ENCODE measurements at regions of chr9 and their contacts with region 1.

Region 1: GRCh38 chr9:95127249-95128176 is 190.0 kb downstream of the FANCC start:
- DNase-seq: peak; percentile 42 to 80 (median 67)
- ATAC-seq: peak; percentile 68
- H3K4me3 ChIP-seq: no peak overlapping the region
- H3K4me3 Mint-ChIP-seq: no peak overlapping the region
- H3K27ac ChIP-seq: no peak overlapping the region
- H3K27ac Mint-ChIP-seq: no peak overlapping the region
- H3K4me1 ChIP-seq: no peaks in the 10 kb centered on the region
- H3K4me1 Mint-ChIP-seq: peaks cover 4% of the 10 kb centered on the region
- H3K27me3 ChIP-seq: no peaks in the 10 kb centered on the region
- H3K27me3 Mint-ChIP-seq: no peaks in the 10 kb centered on the region
- CTCF ChIP-seq: peak; percentile 78

Region 2: DNA sequence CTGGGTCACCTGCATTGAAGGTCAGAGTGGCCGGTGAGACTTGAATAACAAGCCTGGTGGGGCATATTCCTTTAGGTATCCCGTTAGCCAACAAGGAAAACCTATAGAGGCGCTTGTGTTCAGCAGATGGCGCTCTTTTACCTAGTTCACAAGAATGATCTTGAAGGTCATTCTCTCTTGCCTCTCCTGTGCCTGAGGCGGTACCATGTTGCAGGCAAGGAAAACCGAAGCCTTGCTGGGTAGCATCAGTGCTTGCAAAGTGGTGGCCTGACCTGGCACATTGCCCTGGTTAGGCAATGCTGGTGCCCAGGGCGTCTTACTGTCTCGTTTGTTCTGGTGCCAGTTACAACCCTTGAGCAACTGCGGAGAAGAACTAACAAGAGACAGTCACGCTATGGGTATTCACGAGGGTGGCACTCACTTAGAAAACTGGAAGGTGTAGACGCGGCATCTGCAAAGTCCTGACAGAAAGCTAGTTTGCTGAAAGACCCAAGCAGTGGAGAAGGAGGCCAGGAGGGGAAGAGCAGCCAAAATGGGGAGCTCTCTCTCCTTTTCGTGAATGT is 344.3 kb before region 1 on chr9:
- CTCF ChIA-PET with region 1: interaction called, 86 read pairs
- POLR2A ChIA-PET with region 1: no interaction called
- intact Hi-C with region 1: loop called (anchors 1 to 2 kb)
- DNase-seq: peak; percentile 4 to 64 (median 37)
- ATAC-seq: no peak
- H3K4me3 ChIP-seq: no peak overlapping the region
- H3K4me3 Mint-ChIP-seq: no peak overlapping the region
- H3K27ac ChIP-seq: no peak overlapping the region
- H3K27ac Mint-ChIP-seq: no peak overlapping the region
- H3K4me1 ChIP-seq: no peaks in the 10 kb centered on the region
- H3K4me1 Mint-ChIP-seq: peaks cover 4% of the 10 kb centered on the region
- H3K27me3 ChIP-seq: no peaks in the 10 kb centered on the region
- H3K27me3 Mint-ChIP-seq: no peaks in the 10 kb centered on the region
- CTCF ChIP-seq: peak; percentile 53

Region 3: DNA sequence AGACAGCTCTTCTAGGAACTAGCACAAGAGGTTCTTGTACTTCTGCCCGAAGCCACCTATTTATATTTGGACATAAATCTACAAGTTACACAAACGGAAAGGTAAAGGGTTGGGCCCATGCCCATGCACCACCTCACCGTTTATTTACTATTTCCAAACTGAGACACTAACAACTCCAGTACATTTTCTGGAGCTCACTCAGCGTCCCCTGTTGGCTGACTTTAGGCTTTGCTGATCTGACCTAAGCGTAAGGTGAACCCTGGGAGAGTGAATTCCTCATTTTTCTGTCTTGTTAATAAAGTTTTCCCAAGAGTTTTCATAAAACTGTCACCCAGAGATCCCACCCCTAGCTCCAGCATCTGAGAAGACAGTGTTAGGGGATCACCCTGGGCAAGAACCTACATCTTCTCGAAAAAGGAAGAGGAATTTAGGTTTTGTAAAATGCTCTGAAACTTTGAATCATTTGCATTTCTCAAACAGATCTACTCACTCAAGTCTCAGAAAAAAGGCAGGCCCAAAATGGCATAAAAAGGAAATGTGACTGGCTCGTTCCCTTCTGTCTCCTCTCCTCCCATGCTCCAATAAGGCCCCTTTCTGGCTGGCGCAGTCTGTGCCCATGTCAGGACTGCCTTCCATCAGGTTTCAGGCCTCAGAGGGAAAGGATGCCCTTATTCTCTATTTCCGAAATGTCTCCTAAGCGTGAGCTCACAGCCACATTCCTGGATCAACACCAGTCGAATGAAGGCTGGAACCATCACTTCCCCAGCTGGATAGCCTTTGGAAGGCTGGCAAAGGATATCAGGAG is 11.3 kb before region 1 on chr9:
- CTCF ChIA-PET with region 1: interaction called, 20 read pairs
- POLR2A ChIA-PET with region 1: no interaction called
- intact Hi-C with region 1: no loop called
- DNase-seq: no peak
- ATAC-seq: no peak
- H3K4me3 ChIP-seq: no peak overlapping the region
- H3K4me3 Mint-ChIP-seq: no peak overlapping the region
- H3K27ac ChIP-seq: no peak overlapping the region
- H3K27ac Mint-ChIP-seq: no peak overlapping the region
- H3K4me1 ChIP-seq: no peaks in the 10 kb centered on the region
- H3K4me1 Mint-ChIP-seq: no peaks in the 10 kb centered on the region
- H3K27me3 ChIP-seq: no peaks in the 10 kb centered on the region
- H3K27me3 Mint-ChIP-seq: no peaks in the 10 kb centered on the region
- CTCF ChIP-seq: no peak

Region 4: GRCh38 chr9:95137587-95138145 is 10.2 kb after region 1 on chr9:
- CTCF ChIA-PET with region 1: interaction called, 16 read pairs
- POLR2A ChIA-PET with region 1: no interaction called
- intact Hi-C with region 1: no loop called
- DNase-seq: no peak
- ATAC-seq: no peak
- H3K4me3 ChIP-seq: no peak overlapping the region
- H3K4me3 Mint-ChIP-seq: no peak overlapping the region
- H3K27ac ChIP-seq: no peak overlapping the region
- H3K27ac Mint-ChIP-seq: no peak overlapping the region
- H3K4me1 ChIP-seq: no peaks in the 10 kb centered on the region
- H3K4me1 Mint-ChIP-seq: no peaks in the 10 kb centered on the region
- H3K27me3 ChIP-seq: no peaks in the 10 kb centered on the region
- H3K27me3 Mint-ChIP-seq: no peaks in the 10 kb centered on the region
- CTCF ChIP-seq: no peak